Gastrocnemius medialis (tissue), 4 donors: ENCODE measurements at regions of chr14 and their contacts with region 1.

Region 1: GRCh38 chr14:95227279-95227860 is 70.0 kb upstream of the DICER1 start:
- DNase-seq: no peak
- ATAC-seq: peak in 1 of 2 donors; percentile 27
- H3K4me3 ChIP-seq: peak overlapping the region; percentile 17 to 44 (median 28)
- H3K27ac ChIP-seq: peak overlapping the region in 1 of 4 donors; percentile 12
- H3K4me1 ChIP-seq: peaks cover 5 to 15% of the 10 kb centered on the region in 2 donors
- H3K27me3 ChIP-seq: no peaks in the 10 kb centered on the region
- CTCF ChIP-seq: no peak
- POLR2A ChIP-seq: no peak

Region 2: DNA sequence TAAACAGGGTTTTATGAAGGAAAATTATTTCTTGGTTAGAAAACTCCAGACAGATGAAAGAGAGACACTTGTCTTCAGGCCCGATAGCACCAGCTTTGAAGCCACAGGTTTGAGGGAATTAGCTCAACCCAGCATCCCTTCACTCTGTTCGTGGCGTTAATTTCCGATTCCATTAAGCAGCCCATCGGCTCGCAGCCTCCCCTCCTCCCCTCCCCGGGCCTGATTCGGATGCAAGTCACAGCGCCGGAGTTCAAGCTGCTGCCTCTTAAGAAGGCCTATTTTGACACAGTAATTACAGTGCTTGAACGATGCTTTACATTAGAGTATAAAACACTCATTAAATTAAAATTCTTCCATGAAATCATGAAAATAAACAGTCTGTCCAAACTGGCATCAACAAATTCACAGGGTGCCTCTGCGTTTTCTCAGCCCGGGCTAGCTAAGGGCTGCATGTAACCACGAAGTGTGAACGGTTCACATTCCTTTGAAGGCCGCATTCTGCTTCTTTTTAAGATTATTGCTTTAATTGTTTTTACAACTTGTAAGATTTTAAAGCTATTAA is 215.8 kb before region 1 on chr14:
- in situ Hi-C with region 1: no loop called
- intact Hi-C with region 1: no loop called
- DNase-seq: no peak
- ATAC-seq: no peak
- H3K4me3 ChIP-seq: no peak overlapping the region
- H3K27ac ChIP-seq: no peak overlapping the region
- H3K4me1 ChIP-seq: peaks cover 0 to 4% of the 10 kb centered on the region in 2 donors
- H3K27me3 ChIP-seq: no peaks in the 10 kb centered on the region
- CTCF ChIP-seq: no peak
- POLR2A ChIP-seq: no peak

Region 3: GRCh38 chr14:95197552-95197950 is 29.8 kb before region 1 on chr14:
- in situ Hi-C with region 1: no loop called
- intact Hi-C with region 1: loop called (anchors 1 kb)
- DNase-seq: no peak
- ATAC-seq: no peak
- H3K4me3 ChIP-seq: no peak overlapping the region
- H3K27ac ChIP-seq: no peak overlapping the region
- H3K4me1 ChIP-seq: no peaks in the 10 kb centered on the region
- H3K27me3 ChIP-seq: no peaks in the 10 kb centered on the region
- CTCF ChIP-seq: no peak
- POLR2A ChIP-seq: no peak

Region 4: GRCh38 chr14:95211721-95212504 is 15.5 kb before region 1 on chr14:
- in situ Hi-C with region 1: no loop called
- intact Hi-C with region 1: no loop called
- DNase-seq: no peak
- ATAC-seq: no peak
- H3K4me3 ChIP-seq: no peak overlapping the region
- H3K27ac ChIP-seq: no peak overlapping the region
- H3K4me1 ChIP-seq: no peaks in the 10 kb centered on the region
- H3K27me3 ChIP-seq: no peaks in the 10 kb centered on the region
- CTCF ChIP-seq: no peak
- POLR2A ChIP-seq: no peak

Region 5: GRCh38 chr14:95250140-95250769 is 22.9 kb after region 1 on chr14:
- in situ Hi-C with region 1: no loop called
- intact Hi-C with region 1: loop called (anchors 1 kb)
- DNase-seq: no peak
- ATAC-seq: no peak
- H3K4me3 ChIP-seq: no peak overlapping the region
- H3K27ac ChIP-seq: no peak overlapping the region
- H3K4me1 ChIP-seq: no peaks in the 10 kb centered on the region
- H3K27me3 ChIP-seq: no peaks in the 10 kb centered on the region
- CTCF ChIP-seq: no peak
- POLR2A ChIP-seq: no peak

Region 6: DNA sequence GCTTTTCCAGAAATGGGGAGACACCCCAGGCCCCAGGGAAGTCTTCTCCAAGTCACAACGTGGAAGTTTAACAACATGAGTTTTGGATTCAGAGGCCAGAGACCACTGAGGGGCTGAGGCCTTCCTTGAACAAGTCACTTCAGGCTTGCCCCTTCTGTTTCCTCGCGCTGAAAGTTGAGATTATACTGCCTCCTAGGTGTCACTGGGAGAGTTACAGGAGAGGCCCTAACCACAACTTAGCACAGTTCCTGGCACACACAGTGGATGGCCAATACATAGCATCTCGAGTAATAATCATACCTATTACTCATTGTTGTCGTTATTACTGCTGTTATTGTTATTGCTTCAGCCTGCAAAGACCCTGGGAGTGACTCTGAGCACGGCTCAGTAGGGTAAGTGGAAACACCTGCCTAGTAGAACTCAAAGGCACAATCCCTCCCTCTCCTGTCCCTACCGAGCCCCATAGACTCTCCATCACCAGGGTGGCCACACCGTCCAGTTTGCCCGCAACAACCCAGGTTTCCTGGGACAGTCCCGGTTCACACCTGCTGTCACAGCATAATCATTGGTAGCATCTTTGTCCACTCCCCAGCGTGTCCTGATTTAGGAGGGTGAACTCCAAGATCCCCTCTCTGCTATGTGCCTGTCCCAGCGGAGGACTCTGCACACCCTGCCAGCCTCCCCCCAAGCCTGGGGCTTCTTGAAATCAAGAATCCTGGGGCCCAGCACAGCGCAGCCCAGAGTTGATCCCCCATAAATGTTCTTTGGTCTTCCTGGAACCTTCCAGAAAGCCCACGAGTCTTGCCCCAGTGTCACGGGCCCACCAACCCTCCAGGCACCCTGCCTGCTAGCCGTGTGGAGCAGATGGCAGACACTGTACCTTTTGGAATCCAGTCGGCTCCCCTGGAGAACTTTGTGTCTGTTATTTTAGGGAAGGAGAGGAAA is 204.1 kb after region 1 on chr14:
- in situ Hi-C with region 1: no loop called
- intact Hi-C with region 1: no loop called
- DNase-seq: no peak
- ATAC-seq: peak in 1 of 2 donors; percentile 34
- H3K4me3 ChIP-seq: no peak overlapping the region
- H3K27ac ChIP-seq: peak overlapping the region in 3 of 4 donors; percentile 3 to 46 (median 26)
- H3K4me1 ChIP-seq: no peaks in the 10 kb centered on the region
- H3K27me3 ChIP-seq: no peaks in the 10 kb centered on the region
- CTCF ChIP-seq: peak in 2 of 5 experiments; percentile 36 to 41
- POLR2A ChIP-seq: no peak